Heart right ventricle (tissue), 16 donors: ENCODE measurements at regions of chr9 and their contacts with region 1.

Region 1: GRCh38 chr9:37575921-37576721 is at the start of gene FBXO10:
- DNase-seq: peak; percentile 66 to 76
- ATAC-seq: peak; percentile 93 to 97 (median 95)
- H3K4me3 ChIP-seq: peak within 1 kb of the TSS; percentile 82 to 96 (median 90)
- H3K27ac ChIP-seq: peak within 1 kb of the TSS; percentile 53 to 91 (median 87)
- H3K4me1 ChIP-seq: peaks cover 3 to 29% (median 21%) of the 10 kb centered on the region in 9 donors
- H3K27me3 ChIP-seq: no peaks in the 10 kb centered on the region
- CTCF ChIP-seq: no peak
- total RNA-seq, gene FBXO10: 4.8 to 7.4 (median 5.9) TPM

Region 2: GRCh38 chr9:37415011-37415719 is 161.0 kb before region 1 on chr9:
- intact Hi-C with region 1: loop called in 1 of 10 experiments (anchors 5 kb)
- DNase-seq: peak in 1 of 2 donors; percentile 61
- ATAC-seq: peak; percentile 37 to 74 (median 62)
- H3K4me3 ChIP-seq: peak overlapping the region in 2 of 10 donors; percentile 1 to 25
- H3K27ac ChIP-seq: peak overlapping the region in 6 of 10 donors; percentile 4 to 50 (median 28)
- H3K4me1 ChIP-seq: peaks cover 0 to 17% (median 8%) of the 10 kb centered on the region in 9 donors
- H3K27me3 ChIP-seq: no peaks in the 10 kb centered on the region
- CTCF ChIP-seq: peak; percentile 68 to 84 (median 79)

Region 3: GRCh38 chr9:37485389-37486219 is 90.5 kb before region 1 on chr9 and contains the start of gene POLR1E:
- intact Hi-C with region 1: loop called in 5 of 10 experiments (anchors 2 to 10 kb)
- DNase-seq: peak; percentile 93 to 94
- ATAC-seq: peak; percentile 97 to 98 (median 98)
- H3K4me3 ChIP-seq: peak within 1 kb of the TSS; percentile 56 to 87 (median 72)
- H3K27ac ChIP-seq: peak within 1 kb of the TSS; percentile 11 to 91 (median 82)
- H3K4me1 ChIP-seq: peaks cover 9 to 30% (median 28%) of the 10 kb centered on the region in 9 donors
- H3K27me3 ChIP-seq: peaks cover 0 to 8% (median 3%) of the 10 kb centered on the region in 7 donors
- CTCF ChIP-seq: no peak
- total RNA-seq, gene POLR1E: 8.5 to 28.8 (median 20.4) TPM

Region 4: GRCh38 chr9:37496020-37496419 is 80.1 kb before region 1 on chr9:
- intact Hi-C with region 1: loop called in 1 of 10 experiments (anchors 10 kb)
- DNase-seq: no peak
- ATAC-seq: peak in 3 of 8 donors; percentile 34 to 61 (median 55)
- H3K4me3 ChIP-seq: no peak overlapping the region
- H3K27ac ChIP-seq: peak overlapping the region in 2 of 10 donors; percentile 15 to 51
- H3K4me1 ChIP-seq: peaks cover 0 to 5% (median 0%) of the 10 kb centered on the region in 9 donors
- H3K27me3 ChIP-seq: no peaks in the 10 kb centered on the region
- CTCF ChIP-seq: no peak

Region 5: DNA sequence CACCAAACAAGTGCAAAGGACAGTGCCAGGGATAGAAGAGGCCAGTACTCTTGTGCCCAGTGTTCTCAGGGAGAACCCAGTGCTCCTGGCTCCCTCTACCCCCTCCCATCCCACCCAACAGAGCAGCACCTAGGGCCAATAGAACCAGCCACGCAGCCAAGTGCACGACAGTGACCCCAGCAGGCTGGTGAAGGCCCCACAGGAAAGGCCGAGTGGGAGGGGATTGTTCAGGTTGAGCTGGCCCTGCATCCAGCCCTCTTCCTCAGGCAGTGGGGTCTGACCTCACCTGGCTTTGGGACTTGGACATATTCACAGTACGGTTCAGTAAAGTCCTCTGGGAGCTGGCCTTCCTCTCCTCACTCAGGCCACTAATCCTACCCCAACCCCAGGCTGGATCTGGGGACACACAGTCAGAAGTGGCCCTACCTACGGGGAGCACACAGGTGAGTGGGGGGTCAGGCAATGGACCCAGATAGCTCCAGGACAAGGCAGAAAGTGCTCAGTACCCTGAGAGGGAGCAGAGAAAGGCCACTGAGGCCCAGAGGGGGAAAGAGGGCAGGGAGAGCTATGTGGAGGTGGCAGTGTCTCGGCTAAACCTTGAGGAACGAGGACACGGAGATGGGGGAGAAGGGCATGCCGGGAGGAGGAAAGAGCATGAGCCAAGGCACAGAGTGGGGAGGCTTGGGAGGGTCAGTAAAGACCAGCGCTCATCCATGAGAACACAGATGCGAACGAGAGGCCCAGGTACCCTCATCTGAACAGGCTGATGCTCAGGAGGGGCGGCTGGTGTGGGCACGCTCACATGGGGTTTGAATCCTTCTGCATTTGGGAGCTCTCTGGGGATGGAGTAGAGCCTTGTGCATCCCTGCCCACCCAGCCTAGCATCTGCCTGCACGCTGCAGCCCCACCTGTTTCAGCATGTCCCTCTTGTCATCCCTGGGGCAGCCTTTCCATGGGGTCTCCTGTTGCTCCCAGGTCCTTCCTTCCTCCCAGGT is 64.8 kb before region 1 on chr9:
- intact Hi-C with region 1: loop called in 1 of 10 experiments (anchors 10 kb)
- DNase-seq: no peak
- ATAC-seq: peak in 6 of 8 donors; percentile 11 to 54 (median 28)
- H3K4me3 ChIP-seq: no peak overlapping the region
- H3K27ac ChIP-seq: no peak overlapping the region
- H3K4me1 ChIP-seq: no peaks in the 10 kb centered on the region
- H3K27me3 ChIP-seq: no peaks in the 10 kb centered on the region
- CTCF ChIP-seq: peak in 2 of 9 donors; percentile 15 to 31